ENCODE measurements at regions of chr18 and their contacts with region 1.

Region 1: DNA sequence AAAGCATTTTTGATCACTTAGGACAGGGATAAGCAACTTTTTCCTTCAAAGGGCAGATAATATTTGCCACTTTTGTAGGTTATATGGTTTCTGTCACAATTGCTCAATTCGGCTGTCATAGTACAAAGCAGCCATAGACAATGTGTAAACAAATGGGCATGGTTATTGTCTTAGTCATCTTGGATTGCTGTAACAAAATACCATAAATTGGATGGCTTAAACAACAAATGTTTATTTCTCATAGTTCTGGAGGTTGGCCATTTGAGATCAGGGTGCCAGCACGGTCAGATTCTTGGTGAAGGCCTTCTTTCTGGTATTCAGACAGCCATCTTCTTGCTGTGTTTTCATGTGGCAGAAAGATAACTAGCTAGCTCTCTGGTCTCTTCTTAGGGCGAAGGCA is 91.2 kb downstream of the TAF4B start:
- DNase-seq: no peak
- H3K4me3 ChIP-seq: no peak overlapping the region
- H3K27ac ChIP-seq: no peak overlapping the region
- H3K4me1 ChIP-seq: no peaks in the 10 kb centered on the region
- H3K27me3 ChIP-seq: no peaks in the 10 kb centered on the region
- CTCF ChIP-seq: no peak

Region 2: DNA sequence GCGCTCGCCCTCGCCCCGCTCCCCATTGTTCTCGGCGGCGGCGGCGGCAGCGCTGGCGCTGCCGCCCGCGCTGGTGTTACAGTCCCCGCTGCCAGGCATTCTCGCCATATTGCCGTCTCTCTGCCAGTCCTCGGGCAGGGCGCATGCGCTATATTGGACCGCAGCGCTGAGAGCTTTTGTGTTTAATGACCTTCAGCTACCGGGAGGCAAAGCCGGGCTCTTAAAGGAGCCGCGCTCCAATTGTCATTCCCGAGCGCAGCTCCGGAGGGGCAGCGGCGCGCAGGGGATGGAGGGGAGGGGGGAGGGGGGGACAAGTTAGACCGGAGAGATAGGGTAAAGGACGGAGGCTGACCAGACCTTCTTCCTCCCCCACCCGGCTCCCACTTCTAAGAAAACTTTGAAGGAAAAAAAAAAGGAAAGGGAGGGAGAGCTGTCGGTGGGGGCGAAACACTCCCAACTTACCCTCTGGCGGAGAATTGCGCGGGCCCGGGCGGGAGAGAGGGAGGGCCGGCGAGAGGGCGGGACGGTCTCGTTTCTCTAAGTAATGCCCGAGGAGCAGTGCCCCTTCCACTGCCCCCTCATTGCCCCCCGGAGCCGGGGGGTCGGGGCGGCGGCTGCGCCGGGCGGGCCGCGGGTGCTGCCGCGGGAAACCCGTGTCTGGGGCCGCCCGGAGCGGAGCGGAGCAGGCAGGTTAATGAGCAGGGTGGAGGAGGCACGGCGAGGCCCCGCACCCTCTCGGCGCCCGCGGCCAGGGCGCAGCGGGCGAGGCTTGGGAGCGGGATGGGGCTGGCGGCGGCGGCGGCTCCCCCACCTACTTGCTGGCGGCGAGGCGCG is 231.2 kb after region 1 on chr18 and contains the start of gene KCTD1:
- intact Hi-C with region 1: loop called (anchors 10 kb)
- DNase-seq: peak; percentile 90
- H3K4me3 ChIP-seq: peak within 1 kb of the TSS; percentile 68
- H3K27ac ChIP-seq: peak within 1 kb of the TSS; percentile 46
- H3K4me1 ChIP-seq: peaks cover 5% of the 10 kb centered on the region
- H3K27me3 ChIP-seq: peaks cover 20% of the 10 kb centered on the region
- CTCF ChIP-seq: no peak
- total RNA-seq, gene KCTD1: 13.3 to 13.6 TPM